ENCODE measurements at regions of chr4 and their contacts with region 1.

Region 1: GRCh38 chr4:113547487-113548042 is 214.0 kb downstream of the CAMK2D start:
- DNase-seq: peak; percentile 92
- ATAC-seq: peak; percentile 100
- H3K4me3 ChIP-seq: no peak overlapping the region
- H3K4me3 Mint-ChIP-seq: no peak overlapping the region
- H3K27ac ChIP-seq: peak overlapping the region; percentile 13 to 52
- H3K27ac Mint-ChIP-seq: peak overlapping the region; percentile 78
- H3K4me1 ChIP-seq: peaks cover 14 to 15% of the 10 kb centered on the region in 2 donors
- H3K4me1 Mint-ChIP-seq: peaks cover 22% of the 10 kb centered on the region
- H3K27me3 ChIP-seq: no peaks in the 10 kb centered on the region
- H3K27me3 Mint-ChIP-seq: no peaks in the 10 kb centered on the region
- CTCF ChIP-seq: peak; percentile 98

Region 2: GRCh38 chr4:113221990-113222389 is 325.6 kb before region 1 on chr4:
- CTCF ChIA-PET with region 1: no interaction called
- POLR2A ChIA-PET with region 1: no interaction called
- intact Hi-C with region 1: no loop called
- DNase-seq: no peak
- ATAC-seq: no peak
- H3K4me3 ChIP-seq: no peak overlapping the region
- H3K4me3 Mint-ChIP-seq: no peak overlapping the region
- H3K27ac ChIP-seq: no peak overlapping the region
- H3K27ac Mint-ChIP-seq: no peak overlapping the region
- H3K4me1 ChIP-seq: no peaks in the 10 kb centered on the region
- H3K4me1 Mint-ChIP-seq: no peaks in the 10 kb centered on the region
- H3K27me3 ChIP-seq: no peaks in the 10 kb centered on the region
- H3K27me3 Mint-ChIP-seq: peaks cover 3% of the 10 kb centered on the region
- CTCF ChIP-seq: no peak

Region 3: GRCh38 chr4:113564493-113564892 is 16.9 kb after region 1 on chr4:
- CTCF ChIA-PET with region 1: interaction called, 35 read pairs
- POLR2A ChIA-PET with region 1: interaction called, 4 read pairs
- intact Hi-C with region 1: loop called (anchors 1 kb)
- DNase-seq: no peak
- ATAC-seq: peak; percentile 54
- H3K4me3 ChIP-seq: peak overlapping the region in 3 of 5 experiments; percentile 10 to 54 (median 19)
- H3K4me3 Mint-ChIP-seq: peak overlapping the region; percentile 87
- H3K27ac ChIP-seq: peak overlapping the region; percentile 74 to 79
- H3K27ac Mint-ChIP-seq: peak overlapping the region; percentile 98
- H3K4me1 ChIP-seq: peaks cover 60 to 88% of the 10 kb centered on the region in 2 donors
- H3K4me1 Mint-ChIP-seq: peaks cover 74% of the 10 kb centered on the region
- H3K27me3 ChIP-seq: no peaks in the 10 kb centered on the region
- H3K27me3 Mint-ChIP-seq: no peaks in the 10 kb centered on the region
- CTCF ChIP-seq: no peak

Region 4: DNA sequence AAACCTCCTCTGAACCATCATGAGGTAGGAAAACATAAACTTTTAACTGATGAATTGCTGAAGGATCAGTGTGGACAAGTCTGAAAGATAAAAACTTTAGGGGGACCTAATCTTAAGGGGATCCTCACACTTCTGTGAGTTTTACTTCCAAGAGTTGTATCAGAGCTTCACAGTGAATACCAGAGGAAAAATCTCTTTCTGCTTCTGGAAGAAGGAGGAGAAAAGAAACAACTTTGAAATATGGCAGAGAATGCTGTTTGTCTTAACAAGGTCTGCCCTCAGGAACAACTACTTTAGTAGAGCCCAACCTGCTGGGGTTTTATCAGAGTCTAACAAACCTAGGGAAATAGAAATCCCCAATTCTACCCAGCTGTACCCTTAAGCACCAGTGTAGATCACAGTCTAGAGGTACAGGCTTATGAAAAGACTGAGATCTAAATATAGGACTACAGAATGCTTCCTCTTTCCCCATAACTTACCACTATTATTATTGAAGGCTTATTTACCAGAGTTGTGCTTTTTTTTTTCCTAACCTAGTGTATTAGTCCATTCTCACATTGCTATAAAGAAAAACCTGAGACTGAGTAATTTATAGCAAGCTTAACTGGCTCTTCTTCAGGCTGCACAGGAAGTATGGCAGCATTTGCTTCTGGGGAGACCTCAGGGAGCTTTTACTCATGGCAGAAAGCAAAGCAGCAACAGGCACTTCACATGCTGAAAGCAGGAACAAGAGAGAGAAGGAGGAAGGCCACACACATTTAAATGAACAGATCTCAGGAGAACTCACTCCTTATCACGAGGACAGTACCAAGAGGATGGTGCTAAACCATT is 46.0 kb after region 1 on chr4:
- CTCF ChIA-PET with region 1: interaction called, 6 read pairs
- POLR2A ChIA-PET with region 1: interaction called, 9 read pairs
- intact Hi-C with region 1: loop called (anchors 5 kb)
- DNase-seq: peak; percentile 57
- ATAC-seq: peak; percentile 82
- H3K4me3 ChIP-seq: no peak overlapping the region
- H3K4me3 Mint-ChIP-seq: peak overlapping the region; percentile 53
- H3K27ac ChIP-seq: peak overlapping the region; percentile 75 to 85
- H3K27ac Mint-ChIP-seq: peak overlapping the region; percentile 88
- H3K4me1 ChIP-seq: peaks cover 44 to 55% of the 10 kb centered on the region in 2 donors
- H3K4me1 Mint-ChIP-seq: peaks cover 71% of the 10 kb centered on the region
- H3K27me3 ChIP-seq: no peaks in the 10 kb centered on the region
- H3K27me3 Mint-ChIP-seq: no peaks in the 10 kb centered on the region
- CTCF ChIP-seq: no peak

Region 5: GRCh38 chr4:113628711-113629110 is 81.1 kb after region 1 on chr4:
- CTCF ChIA-PET with region 1: no interaction called
- POLR2A ChIA-PET with region 1: no interaction called
- intact Hi-C with region 1: no loop called
- DNase-seq: no peak
- ATAC-seq: no peak
- H3K4me3 ChIP-seq: no peak overlapping the region
- H3K4me3 Mint-ChIP-seq: no peak overlapping the region
- H3K27ac ChIP-seq: no peak overlapping the region
- H3K27ac Mint-ChIP-seq: no peak overlapping the region
- H3K4me1 ChIP-seq: peaks cover 3 to 22% of the 10 kb centered on the region in 2 donors
- H3K4me1 Mint-ChIP-seq: peaks cover 64% of the 10 kb centered on the region
- H3K27me3 ChIP-seq: no peaks in the 10 kb centered on the region
- H3K27me3 Mint-ChIP-seq: no peaks in the 10 kb centered on the region
- CTCF ChIP-seq: no peak

Region 6: GRCh38 chr4:113673450-113673849 is 125.9 kb after region 1 on chr4:
- CTCF ChIA-PET with region 1: interaction called, 12 read pairs
- POLR2A ChIA-PET with region 1: no interaction called
- intact Hi-C with region 1: no loop called
- DNase-seq: peak; percentile 33
- ATAC-seq: peak; percentile 82
- H3K4me3 ChIP-seq: no peak overlapping the region
- H3K4me3 Mint-ChIP-seq: no peak overlapping the region
- H3K27ac ChIP-seq: no peak overlapping the region
- H3K27ac Mint-ChIP-seq: peak overlapping the region; percentile 63
- H3K4me1 ChIP-seq: peaks cover 34 to 42% of the 10 kb centered on the region in 2 donors
- H3K4me1 Mint-ChIP-seq: peaks cover 55% of the 10 kb centered on the region
- H3K27me3 ChIP-seq: no peaks in the 10 kb centered on the region
- H3K27me3 Mint-ChIP-seq: no peaks in the 10 kb centered on the region
- CTCF ChIP-seq: no peak

Region 7: GRCh38 chr4:113761620-113762185 is 214.1 kb after region 1 on chr4 and contains the start of gene CAMK2D:
- CTCF ChIA-PET with region 1: interaction called, 25 read pairs
- POLR2A ChIA-PET with region 1: interaction called, 11 read pairs
- intact Hi-C with region 1: loop called (anchors 1 kb)
- DNase-seq: peak; percentile 91
- ATAC-seq: peak; percentile 46
- H3K4me3 ChIP-seq: peak within 1 kb of the TSS; percentile 91 to 96 (median 93)
- H3K4me3 Mint-ChIP-seq: peak within 1 kb of the TSS; percentile 94
- H3K27ac ChIP-seq: peak within 1 kb of the TSS; percentile 98 to 99
- H3K27ac Mint-ChIP-seq: peak within 1 kb of the TSS; percentile 98
- H3K4me1 ChIP-seq: peaks cover 16 to 27% of the 10 kb centered on the region in 2 donors
- H3K4me1 Mint-ChIP-seq: peaks cover 36% of the 10 kb centered on the region
- H3K27me3 ChIP-seq: no peaks in the 10 kb centered on the region
- H3K27me3 Mint-ChIP-seq: no peaks in the 10 kb centered on the region
- CTCF ChIP-seq: peak; percentile 34
- total RNA-seq, gene CAMK2D: 55.9 and 57.0 TPM in 2 replicates

Region 8: DNA sequence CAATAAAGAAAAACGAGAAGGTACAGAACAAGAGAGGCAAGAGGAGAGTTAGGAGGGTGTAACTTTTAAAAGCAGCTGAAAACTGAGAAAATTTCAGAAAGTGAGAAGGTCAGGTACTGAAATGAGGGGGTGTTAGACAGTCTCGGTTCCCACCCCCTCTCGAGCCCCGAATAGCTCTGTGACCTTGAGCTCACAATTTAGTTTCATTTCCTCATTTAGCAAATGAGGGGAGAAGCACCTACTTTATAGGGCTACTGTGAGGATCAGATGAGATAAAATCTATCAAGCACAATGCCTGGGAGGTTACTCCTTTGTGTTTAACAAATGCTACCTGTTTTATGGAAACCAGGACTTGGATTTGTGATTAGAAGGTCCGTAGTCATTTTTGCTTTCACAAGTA is 1055.9 kb after region 1 on chr4:
- CTCF ChIA-PET with region 1: no interaction called
- POLR2A ChIA-PET with region 1: no interaction called
- intact Hi-C with region 1: loop called (anchors 5 kb)
- DNase-seq: peak; percentile 86
- ATAC-seq: peak; percentile 71
- H3K4me3 ChIP-seq: peak overlapping the region in 2 of 5 experiments; percentile 20 to 43
- H3K4me3 Mint-ChIP-seq: no peak overlapping the region
- H3K27ac ChIP-seq: peak overlapping the region; percentile 67 to 93
- H3K27ac Mint-ChIP-seq: no peak overlapping the region
- H3K4me1 ChIP-seq: peaks cover 47 to 65% of the 10 kb centered on the region in 2 donors
- H3K4me1 Mint-ChIP-seq: peaks cover 23% of the 10 kb centered on the region
- H3K27me3 ChIP-seq: no peaks in the 10 kb centered on the region
- H3K27me3 Mint-ChIP-seq: no peaks in the 10 kb centered on the region
- CTCF ChIP-seq: no peak

Measured in B cell (primary cell).